PC-3 (cell line): ENCODE measurements at regions of chr17 and their contacts with region 1.

Region 1: GRCh38 chr17:78933959-78934568 is 8.9 kb upstream of the TIMP2 start:
- DNase-seq: peak; percentile 95
- ATAC-seq: peak; percentile 64
- H3K4me3 ChIP-seq: peak overlapping the region; percentile 16
- H3K27ac ChIP-seq: peak overlapping the region; percentile 89
- H3K4me1 ChIP-seq: peaks cover 42% of the 10 kb centered on the region
- H3K27me3 ChIP-seq: no peaks in the 10 kb centered on the region
- CTCF ChIP-seq: no peak

Region 2: GRCh38 chr17:78840725-78841611 is 93.1 kb before region 1 on chr17 and contains the start of gene USP36:
- CTCF ChIA-PET with region 1: no interaction called
- POLR2A ChIA-PET with region 1: no interaction called
- intact Hi-C with region 1: loop called (anchors 2 kb)
- DNase-seq: peak; percentile 100
- ATAC-seq: peak; percentile 82
- H3K4me3 ChIP-seq: peak within 1 kb of the TSS; percentile 77
- H3K27ac ChIP-seq: peak within 1 kb of the TSS; percentile 84
- H3K4me1 ChIP-seq: peaks cover 39% of the 10 kb centered on the region
- H3K27me3 ChIP-seq: no peaks in the 10 kb centered on the region
- CTCF ChIP-seq: no peak
- total RNA-seq, gene USP36: 37.5 and 41.8 TPM in 2 replicates